Cardiac septum (tissue), 1 donor: ENCODE measurements at regions of chr3 and their contacts with region 1.

Region 1: GRCh38 chr3:46976326-46977190 is at the start of gene CCDC12:
- DNase-seq: peak; percentile 98
- total RNA-seq, gene CCDC12: 35.6 TPM

Region 2: DNA sequence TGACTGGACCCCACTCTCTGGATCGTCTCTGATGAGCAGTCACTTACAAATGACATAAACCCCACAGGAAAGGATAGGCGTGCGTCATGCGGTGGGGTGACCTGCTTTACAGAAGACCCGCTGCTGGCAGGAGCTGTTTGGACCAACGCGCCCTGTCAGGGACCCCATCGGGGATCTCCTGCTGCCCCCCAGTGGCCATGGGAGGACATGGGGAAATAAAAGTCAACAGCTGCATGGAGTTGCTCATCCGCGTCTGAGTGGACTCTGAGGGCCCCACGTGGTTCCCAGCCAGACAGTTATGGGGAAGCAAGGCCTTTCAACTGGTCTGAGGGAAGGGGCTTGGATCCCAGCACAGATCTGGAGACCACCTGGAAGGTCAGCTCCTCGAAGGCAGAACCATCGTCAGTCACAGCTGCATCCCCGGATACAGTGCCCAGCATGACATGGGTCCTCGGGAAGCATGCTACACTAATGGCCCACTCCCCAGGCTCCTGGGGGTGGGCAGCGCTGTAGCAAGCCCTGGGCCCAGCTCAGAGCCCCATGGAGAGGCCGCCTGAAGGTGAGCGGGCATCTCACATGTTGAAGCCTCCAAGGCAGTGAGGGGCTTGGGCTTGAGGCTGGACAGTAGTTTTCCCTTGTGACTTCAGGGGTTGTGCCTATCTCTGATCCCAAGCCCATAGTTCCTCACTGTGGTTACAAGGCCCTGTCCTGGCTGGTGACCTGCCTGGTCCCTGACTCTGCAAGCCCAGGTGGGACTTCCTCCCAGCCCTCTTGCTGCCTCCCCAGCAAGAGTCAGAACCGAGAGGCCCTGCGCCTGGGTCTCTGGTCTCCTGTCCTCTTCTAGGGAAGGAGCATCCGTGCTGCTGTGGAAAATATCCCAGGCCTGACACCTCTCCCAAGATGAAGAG is 66.8 kb before region 1 on chr3:
- intact Hi-C with region 1: no loop called
- DNase-seq: peak; percentile 89

Region 3: GRCh38 chr3:46935168-46935858 is 41.2 kb before region 1 on chr3:
- intact Hi-C with region 1: loop called (anchors 2 kb)
- DNase-seq: peak; percentile 91

Region 4: GRCh38 chr3:46947981-46948791 is 28.4 kb before region 1 on chr3:
- intact Hi-C with region 1: loop called (anchors 2 kb)
- DNase-seq: peak; percentile 85

Region 5: GRCh38 chr3:46987743-46988401 is 11.3 kb after region 1 on chr3:
- intact Hi-C with region 1: no loop called
- DNase-seq: peak; percentile 94

Region 6: DNA sequence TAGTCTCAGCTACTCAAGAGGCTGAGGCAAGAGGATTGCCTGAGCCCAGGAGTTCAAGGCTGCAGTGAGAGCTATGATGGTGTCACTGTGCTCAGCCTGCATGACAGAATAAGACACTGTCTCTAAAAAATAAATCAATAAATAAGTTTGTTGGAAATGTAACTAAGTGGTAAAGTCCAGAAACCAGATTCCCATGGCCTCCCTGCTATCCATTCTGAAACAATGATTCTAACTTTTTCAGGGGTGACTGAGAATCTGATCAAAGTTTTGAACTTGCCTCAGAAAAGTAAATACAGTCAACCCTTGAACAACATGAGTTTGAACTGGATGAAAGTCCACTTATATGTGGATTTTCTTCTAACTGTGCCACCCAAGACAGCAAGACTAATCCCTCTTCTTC is 89.1 kb after region 1 on chr3:
- intact Hi-C with region 1: no loop called
- DNase-seq: no peak